ENCODE measurements at regions of chr6 and their contacts with region 1.

Region 1: DNA sequence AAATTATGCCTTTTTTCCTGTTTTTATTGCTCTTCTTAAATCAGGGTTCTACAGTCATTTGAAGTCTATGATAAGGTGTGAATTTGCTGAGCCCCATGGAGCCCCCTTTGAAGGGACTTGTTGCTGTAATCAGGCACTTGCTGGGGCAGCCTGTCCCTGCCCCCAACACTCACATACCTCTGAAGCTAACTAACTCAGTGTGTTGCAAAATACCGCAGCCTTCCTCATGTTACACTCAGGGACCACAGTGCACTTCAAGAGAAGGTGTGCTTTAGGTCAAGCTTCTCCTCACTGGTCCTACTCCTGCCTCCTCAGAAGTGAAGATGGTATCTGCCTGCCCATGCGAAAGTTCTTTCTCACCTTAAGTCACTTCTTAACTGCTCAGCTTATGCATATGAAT is 66.1 kb upstream of the GLP1R start:
- DNase-seq: no peak
- ATAC-seq: no peak
- H3K4me3 ChIP-seq: no peak overlapping the region
- H3K27ac ChIP-seq: no peak overlapping the region
- H3K4me1 ChIP-seq: no peaks in the 10 kb centered on the region
- H3K27me3 ChIP-seq: peaks cover 0 to 9% of the 10 kb centered on the region in 2 donors
- CTCF ChIP-seq: no peak
- POLR2A ChIP-seq: no peak

Region 2: GRCh38 chr6:39075010-39075686 is 92.7 kb after region 1 on chr6:
- intact Hi-C with region 1: loop called in 1 of 2 experiments (anchors 10 kb)
- DNase-seq: peak in 1 of 3 donors; percentile 25
- ATAC-seq: no peak
- H3K4me3 ChIP-seq: no peak overlapping the region
- H3K27ac ChIP-seq: no peak overlapping the region
- H3K4me1 ChIP-seq: no peaks in the 10 kb centered on the region
- H3K27me3 ChIP-seq: no peaks in the 10 kb centered on the region
- CTCF ChIP-seq: no peak
- POLR2A ChIP-seq: no peak